ENCODE measurements at regions of chr2 and their contacts with region 1.

Region 1: DNA sequence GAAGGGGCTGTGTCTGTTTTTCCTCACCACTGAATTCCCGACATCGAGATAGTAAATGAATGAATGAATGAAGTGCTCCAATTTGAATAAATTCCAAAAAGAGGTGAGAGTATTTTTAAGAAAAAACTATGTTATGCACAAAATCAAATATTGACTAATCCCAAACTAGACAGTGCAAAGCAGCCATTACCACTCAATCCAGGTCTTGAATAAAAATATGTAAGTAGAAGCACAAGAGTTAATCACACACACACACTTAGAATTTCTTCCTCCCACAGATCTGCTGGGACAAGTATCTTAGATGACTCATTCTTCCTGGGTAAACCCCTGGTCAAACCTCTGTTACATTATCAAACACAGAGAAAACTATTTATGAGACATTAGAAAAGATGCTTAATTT is 102.0 kb downstream of the PLA2R1 start:
- DNase-seq: peak; percentile 44
- ATAC-seq: peak; percentile 67
- H3K4me3 ChIP-seq: no peak overlapping the region
- H3K27ac ChIP-seq: peak overlapping the region; percentile 24; the same call in 1 of the 2 replicates
- H3K4me1 ChIP-seq: peaks cover 25% of the 10 kb centered on the region
- H3K27me3 ChIP-seq: no peaks in the 10 kb centered on the region
- CTCF ChIP-seq: no peak
- EP300 ChIP-seq: no peak; a peak in 1 of 4 replicates
- POLR2A ChIP-seq: no peak
- RAD21 ChIP-seq: no peak

Region 2: GRCh38 chr2:159879051-159879604 is 81.3 kb before region 1 on chr2:
- CTCF ChIA-PET with region 1: no interaction called
- POLR2A ChIA-PET with region 1: no interaction called
- RAD21 ChIA-PET with region 1: no interaction called
- SMC1A ChIA-PET with region 1: interaction called, 4 read pairs
- in situ Hi-C with region 1: no loop called
- intact Hi-C with region 1: loop called (anchors 5 kb)
- DNase-seq: peak; percentile 77
- ATAC-seq: peak; percentile 88
- H3K4me3 ChIP-seq: no peak overlapping the region
- H3K27ac ChIP-seq: peak overlapping the region; percentile 85
- H3K4me1 ChIP-seq: peaks cover 17% of the 10 kb centered on the region
- H3K27me3 ChIP-seq: no peaks in the 10 kb centered on the region
- CTCF ChIP-seq: no peak
- EP300 ChIP-seq: peak; percentile 89 to 95
- POLR2A ChIP-seq: no peak
- RAD21 ChIP-seq: no peak

Region 3: DNA sequence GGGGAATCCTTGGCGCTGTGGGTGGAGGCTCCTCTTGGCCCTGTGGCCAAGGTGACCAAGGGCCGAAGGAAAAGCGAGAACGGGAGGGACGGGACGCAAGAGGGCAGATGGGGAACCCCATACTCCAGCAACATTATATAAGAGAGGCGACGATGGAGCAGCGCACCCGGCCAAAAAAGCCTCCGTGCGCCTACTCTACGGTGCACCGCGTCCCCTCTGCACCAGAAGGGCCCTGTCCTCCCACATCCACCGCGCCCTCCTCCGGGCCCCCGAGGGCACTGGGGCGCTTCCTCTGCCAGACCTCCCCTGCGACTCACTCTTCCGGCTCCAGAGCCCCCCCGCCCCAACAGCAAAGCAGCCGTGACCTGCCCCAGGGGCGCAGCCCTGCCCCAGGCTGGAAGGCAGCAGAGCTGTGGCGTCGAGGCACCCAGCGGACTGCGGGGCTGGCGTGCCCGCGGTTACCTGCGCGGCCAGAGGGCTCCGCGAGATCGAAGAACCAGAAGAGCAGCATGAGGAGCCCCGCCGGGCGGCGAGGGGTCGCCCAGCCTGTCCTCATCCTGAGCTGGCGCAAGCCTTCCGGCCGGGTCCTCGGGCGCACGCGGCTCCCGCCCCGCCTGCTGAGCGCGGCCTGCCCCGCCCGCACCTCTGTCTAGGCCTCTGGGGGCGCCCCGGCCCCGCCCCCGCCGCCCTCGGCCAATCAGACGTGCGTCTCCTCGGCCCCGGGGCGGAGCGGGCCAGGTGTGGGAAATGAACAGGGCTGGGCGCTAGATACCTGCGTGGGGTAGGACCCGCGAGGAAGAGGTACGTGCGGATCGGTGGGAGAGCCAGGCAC is 56.0 kb before region 1 on chr2:
- CTCF ChIA-PET with region 1: interaction called, 3 read pairs
- POLR2A ChIA-PET with region 1: interaction called, 3 read pairs
- RAD21 ChIA-PET with region 1: interaction called, 3 read pairs
- SMC1A ChIA-PET with region 1: interaction called, 8 read pairs
- in situ Hi-C with region 1: no loop called
- intact Hi-C with region 1: loop called (anchors 2 kb)
- DNase-seq: no peak
- ATAC-seq: peak; percentile 82
- H3K4me3 ChIP-seq: peak within 1 kb of the TSS; percentile 94
- H3K27ac ChIP-seq: peak within 1 kb of the TSS; percentile 83
- H3K4me1 ChIP-seq: peaks cover 25% of the 10 kb centered on the region
- H3K27me3 ChIP-seq: no peaks in the 10 kb centered on the region
- CTCF ChIP-seq: 0 out of 6 replicates have a peak, but pooled peaks of 1 of the 3 experiments have one; percentile 0
- EP300 ChIP-seq: no peak
- POLR2A ChIP-seq: peak; percentile 93
- RAD21 ChIP-seq: no peak

Measured in GM12878 (cell line).